Aorta (tissue), 5 donors: ENCODE measurements at regions of chr2 and their contacts with region 1.

Region 1: GRCh38 chr2:180583441-180584140 is 396.8 kb upstream of the UBE2E3 start:
- DNase-seq: no peak
- ATAC-seq: no peak
- H3K4me3 ChIP-seq: no peak overlapping the region
- H3K27ac ChIP-seq: no peak overlapping the region
- H3K4me1 ChIP-seq: no peaks in the 10 kb centered on the region
- H3K27me3 ChIP-seq: no peaks in the 10 kb centered on the region

Region 2: GRCh38 chr2:180562378-180562777 is 21.2 kb before region 1 on chr2:
- intact Hi-C with region 1: loop called in 1 of 2 experiments (anchors 1 kb)
- DNase-seq: no peak
- ATAC-seq: no peak
- H3K4me3 ChIP-seq: no peak overlapping the region
- H3K27ac ChIP-seq: no peak overlapping the region
- H3K4me1 ChIP-seq: no peaks in the 10 kb centered on the region
- H3K27me3 ChIP-seq: no peaks in the 10 kb centered on the region